Sciatic nerve (tissue), 2 donors: ENCODE measurements at regions of chr7 and their contacts with region 1.

Region 1: GRCh38 chr7:98168181-98168905 is 42.9 kb upstream of the BHLHA15 start:
- DNase-seq: peak; percentile 70
- ATAC-seq: peak; percentile 66

Region 2: DNA sequence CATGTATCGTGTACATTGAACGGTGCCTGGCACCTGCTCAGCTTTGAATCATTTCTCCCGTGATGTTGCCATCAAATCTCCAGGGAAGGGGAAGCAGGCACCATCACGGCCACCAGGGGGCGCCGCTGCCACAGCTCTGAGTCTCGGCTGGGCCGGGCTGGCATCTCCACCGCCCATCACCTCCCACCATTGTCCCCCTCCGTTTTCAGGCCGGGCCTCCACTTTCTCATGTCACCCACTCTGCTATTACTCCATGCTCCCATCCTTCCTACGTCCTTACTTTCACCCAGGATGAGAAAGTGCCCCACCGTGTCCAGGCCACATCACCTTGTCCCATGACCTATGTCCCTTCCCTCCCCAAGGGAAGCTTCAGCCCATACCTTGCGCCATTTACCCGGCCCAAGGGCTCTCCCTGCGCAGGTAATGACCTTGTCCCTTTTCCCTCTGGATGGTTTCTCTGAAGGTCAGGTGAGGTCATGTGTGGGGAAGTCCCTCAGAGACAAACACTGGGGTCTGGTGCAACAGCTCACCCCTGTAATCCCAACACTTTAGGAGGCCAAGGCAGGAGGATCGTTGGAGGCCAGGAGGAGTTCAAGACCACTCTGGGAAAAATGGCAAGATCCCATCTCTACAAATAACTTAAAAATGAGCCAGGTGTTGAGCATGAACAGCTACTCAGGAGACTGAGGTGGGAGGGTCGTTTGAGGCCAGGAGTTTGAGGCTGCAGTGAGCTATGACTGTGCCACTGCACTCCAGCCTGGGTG is 146.6 kb before region 1 on chr7:
- intact Hi-C with region 1: loop called (anchors 10 kb)
- DNase-seq: peak; percentile 81
- ATAC-seq: peak; percentile 65

Region 3: DNA sequence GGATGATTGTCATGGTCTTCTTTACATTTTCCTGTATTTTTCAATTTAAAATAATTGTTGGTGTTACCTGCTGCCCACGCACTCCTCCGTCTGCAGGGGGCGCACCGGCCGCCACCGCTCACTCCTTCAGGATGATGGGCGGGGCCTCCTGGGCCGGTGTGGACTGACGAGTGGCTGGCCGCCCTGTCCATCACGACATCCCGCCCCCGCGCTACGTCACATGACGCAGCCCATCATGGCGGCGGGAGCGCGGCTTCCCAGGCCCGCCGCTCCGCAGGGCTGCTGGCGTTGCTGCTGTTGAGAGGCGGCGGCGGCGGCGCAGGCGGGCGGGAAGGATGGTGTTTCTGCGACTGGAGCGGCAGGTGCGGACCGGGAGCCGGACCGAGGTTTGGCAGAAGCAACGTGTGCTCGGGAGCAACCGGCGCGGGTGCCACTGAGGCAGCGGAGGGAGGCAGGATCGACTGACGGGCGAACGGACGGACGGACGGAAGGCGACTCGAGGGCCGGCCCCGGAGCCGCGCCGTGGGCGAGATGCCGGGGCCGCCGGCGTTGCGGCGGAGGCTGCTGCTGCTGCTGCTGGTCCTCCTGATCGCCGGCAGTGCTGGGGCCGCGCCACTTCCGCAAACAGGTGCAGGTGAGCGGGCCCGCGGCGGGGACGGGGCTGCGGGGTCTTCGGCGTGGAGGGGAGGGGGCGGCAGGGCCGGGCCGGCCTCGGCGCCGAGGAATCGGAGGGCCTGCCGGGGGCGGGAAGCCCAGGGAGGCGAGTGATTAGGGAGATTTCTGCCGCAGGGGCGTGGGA is 61.5 kb before region 1 on chr7 and contains the start of gene LMTK2:
- intact Hi-C with region 1: loop called (anchors 5 kb)
- DNase-seq: peak; percentile 98
- ATAC-seq: peak; percentile 100
- total RNA-seq, gene LMTK2: 14.5 TPM